Dorsolateral prefrontal cortex (tissue), 120 donors: ENCODE measurements at regions of chr4 and their contacts with region 1.

Region 1: GRCh38 chr4:76179398-76180318 is 31.5 kb upstream of the NUP54 start:
- DNase-seq: peak; percentile 68 to 95 (median 88)
- H3K4me3 ChIP-seq: peak overlapping the region in 6 of 59 donors; percentile 2 to 26 (median 6)
- H3K27ac ChIP-seq: peak overlapping the region in 58 of 59 donors; percentile 40 to 96 (median 83)
- H3K27me3 ChIP-seq: no peaks in the 10 kb centered on the region
- CTCF ChIP-seq: peak; percentile 73 to 99 (median 95)

Region 2: DNA sequence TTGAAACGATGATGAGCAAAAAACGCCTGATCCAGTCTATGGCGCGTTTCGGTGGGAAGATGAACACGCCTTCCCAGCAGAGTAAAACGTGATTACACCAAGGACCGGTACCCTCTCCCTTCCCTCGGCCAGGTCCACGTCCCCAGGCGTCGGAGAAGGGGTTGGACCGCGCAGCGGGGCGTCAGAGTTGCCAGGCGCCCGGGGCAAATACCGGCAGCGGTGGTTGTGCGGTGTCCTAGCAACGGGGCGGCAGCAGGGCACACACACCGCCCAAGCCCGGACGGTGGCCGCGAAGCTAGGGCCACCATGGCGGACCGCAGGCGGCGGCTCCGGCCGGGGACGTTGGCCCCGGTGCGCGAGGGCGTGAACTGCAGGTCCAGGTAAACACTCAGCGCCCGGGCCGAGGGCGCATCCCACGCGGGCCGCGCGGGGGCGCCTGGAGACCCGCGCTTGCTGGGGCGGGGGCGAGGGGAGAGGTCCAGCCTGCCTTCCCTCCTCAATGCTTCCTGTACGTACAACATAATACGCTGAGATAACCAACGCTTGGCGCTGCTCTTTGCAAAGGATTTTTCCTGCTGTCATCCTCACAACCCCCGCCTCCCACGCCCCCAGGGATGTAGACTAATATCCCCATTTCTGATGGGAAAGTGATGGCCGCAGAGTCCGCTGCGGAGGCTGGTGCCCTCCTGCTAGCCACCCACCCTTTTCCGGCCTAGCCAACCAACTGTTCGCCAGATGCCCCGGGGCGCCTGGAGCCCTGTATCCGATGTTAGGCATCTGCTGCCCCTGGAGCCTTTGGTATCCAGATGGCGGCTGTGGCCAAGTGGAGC is 72.0 kb after region 1 on chr4 and contains the start of gene FAM47E:
- intact Hi-C with region 1: loop called (anchors 5 to 10 kb)
- DNase-seq: peak; percentile 50 to 84 (median 69)
- H3K4me3 ChIP-seq: peak within 1 kb of the TSS; percentile 49 to 93 (median 82)
- H3K27ac ChIP-seq: peak within 1 kb of the TSS in 48 of 59 donors; percentile 1 to 86 (median 56)
- H3K27me3 ChIP-seq: no peaks in the 10 kb centered on the region
- CTCF ChIP-seq: peak in 48 of 56 donors; percentile 11 to 67 (median 47)
- total RNA-seq, gene FAM47E: 7.2 to 35.1 (median 21.0) TPM

Region 3: DNA sequence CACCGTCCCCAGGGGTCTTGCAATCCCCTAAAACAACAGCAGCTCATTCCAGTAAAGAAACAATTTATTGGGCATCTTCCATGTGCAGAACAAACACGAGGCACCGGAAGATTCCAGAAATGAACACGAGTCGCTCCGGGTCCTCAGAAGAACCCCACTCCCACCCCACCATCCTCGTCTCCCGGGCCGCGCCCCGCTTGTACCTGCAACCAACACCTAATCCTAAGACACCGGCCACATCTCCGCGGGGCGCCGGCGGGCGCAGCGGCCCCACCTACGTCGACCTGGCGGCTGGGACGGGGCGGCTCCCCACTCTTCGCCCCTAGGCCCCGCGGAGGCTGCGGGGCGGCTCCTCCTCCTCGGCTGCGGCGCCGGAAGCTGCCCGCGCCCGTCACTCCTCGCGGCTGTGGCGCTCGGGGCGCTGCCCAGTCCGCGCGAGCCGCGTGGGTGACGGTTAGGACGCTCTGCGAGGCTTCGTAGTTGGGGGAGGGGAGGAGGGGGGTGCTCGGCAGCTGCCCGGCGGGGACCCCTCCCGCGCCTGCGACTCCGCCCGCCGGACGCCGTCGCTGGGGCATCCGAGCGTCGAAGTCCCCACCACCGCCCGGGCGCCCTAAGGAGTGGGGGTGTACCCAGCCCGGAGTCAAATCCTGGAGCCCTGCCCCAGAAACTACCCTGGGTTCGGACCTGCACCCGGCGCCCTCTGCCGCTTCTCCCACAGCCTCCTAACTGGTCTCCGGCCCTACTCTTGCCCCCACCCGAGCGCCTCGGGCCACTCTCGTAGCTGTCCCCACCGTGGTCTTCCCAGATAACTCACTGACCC is 241.3 kb after region 1 on chr4 and contains the start of gene CCDC158:
- intact Hi-C with region 1: loop called in 1 of 2 experiments (anchors 10 kb)
- DNase-seq: no peak
- H3K4me3 ChIP-seq: peak within 1 kb of the TSS; percentile 37 to 75 (median 60)
- H3K27ac ChIP-seq: peak within 1 kb of the TSS in 2 of 59 donors; percentile 10 to 18
- H3K27me3 ChIP-seq: peaks cover 0 to 5% (median 0%) of the 10 kb centered on the region in 45 donors
- CTCF ChIP-seq: no peak
- total RNA-seq, gene CCDC158: 1.1 to 8.1 (median 3.1) TPM